Activated T-helper 1 cell treated with anti-CD3 and anti-CD28 coated beads, Interleukin-12 subunit alpha, Interleukin-12 subunit beta, Interleukin-2, Interleukin-4 antibody, amounts not matched to agents 30 ng/mL and 10 ng/mL and 1 ng/mL, durations not matched to agents 14 hours and 24 hours and 36 hours (primary cell): ENCODE measurements at regions of chrX and their contacts with region 1.

Region 1: DNA sequence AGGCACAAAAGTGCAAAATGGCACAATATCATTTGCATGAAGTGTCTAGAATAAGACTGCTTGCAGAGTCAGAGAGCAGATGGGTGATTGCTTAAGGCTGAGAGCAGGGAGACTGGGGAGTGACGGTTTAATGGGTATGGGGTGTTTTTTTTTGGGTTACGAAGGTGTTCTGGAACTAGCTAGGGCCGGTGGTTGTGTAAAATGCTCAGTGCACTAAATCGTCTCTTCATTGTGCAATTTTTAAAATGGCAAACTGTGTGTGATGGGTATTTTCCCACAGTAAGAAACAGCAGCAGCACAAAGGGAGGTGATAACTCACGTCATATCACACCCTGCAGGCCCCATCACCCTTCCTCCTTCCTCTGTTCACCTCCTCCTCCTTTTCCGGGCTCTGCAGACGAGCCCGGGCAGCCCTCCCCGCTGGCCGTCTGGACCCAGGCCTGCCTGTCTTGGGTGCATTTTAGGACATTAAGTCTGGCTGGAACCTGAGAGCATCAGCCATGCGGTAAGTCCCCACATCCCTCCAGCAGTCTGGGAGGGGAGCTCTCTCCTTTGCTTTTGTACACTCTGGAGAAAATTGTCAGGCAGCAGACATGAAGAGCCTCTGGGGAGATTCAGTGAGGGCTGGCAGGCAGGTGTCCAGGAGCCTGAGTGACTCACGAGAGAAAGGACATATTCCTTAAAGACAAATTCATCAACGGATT is 42.7 kb downstream of the ASMT start:
- DNase-seq: peak; percentile 51
- H3K4me3 Mint-ChIP-seq: peak overlapping the region; percentile 98
- H3K27ac Mint-ChIP-seq: peak overlapping the region; percentile 99
- H3K4me1 Mint-ChIP-seq: peaks cover 36% of the 10 kb centered on the region
- H3K27me3 Mint-ChIP-seq: no peaks in the 10 kb centered on the region

Region 2: DNA sequence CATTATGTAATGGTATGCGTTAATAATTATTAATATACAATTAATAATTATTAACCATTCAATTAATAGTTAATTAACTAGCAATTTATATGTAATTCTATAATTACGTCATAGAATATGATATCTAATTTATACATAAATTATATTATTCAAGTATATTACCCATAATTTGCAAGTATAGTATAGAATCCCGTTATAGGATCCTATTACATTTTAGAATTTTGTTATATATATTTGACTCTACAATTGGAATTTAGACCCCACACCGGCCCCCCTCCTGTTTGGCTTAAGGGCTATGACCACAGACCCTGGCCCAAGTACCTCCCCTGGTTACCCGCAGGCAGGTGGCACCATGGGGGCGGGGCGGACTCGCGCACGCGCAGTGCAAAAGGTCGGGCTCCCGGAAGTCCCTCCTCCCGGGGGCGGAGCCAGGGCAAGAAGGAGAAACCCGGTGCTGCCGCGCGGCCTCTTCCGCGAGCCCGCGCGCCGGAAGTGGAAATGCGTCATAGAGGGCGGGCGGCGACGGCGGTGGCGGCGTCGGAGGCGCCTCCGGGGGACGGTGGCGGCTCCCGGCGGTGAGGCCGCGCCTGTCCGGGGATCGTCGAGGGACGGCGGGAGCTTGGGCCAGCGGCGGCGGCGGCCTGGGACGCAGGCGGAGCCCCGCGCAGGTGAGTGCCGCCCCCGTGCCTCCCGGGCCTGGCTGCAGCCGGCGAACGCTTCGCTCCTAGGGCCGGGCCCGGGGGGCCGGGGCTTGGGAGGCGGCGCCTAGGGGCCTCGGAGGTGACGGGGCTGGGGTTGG is 66.2 kb before region 1 on chrX and contains the start of gene AKAP17A:
- intact Hi-C with region 1: loop called (anchors 1 kb)
- DNase-seq: peak; percentile 99
- H3K4me3 Mint-ChIP-seq: peak within 1 kb of the TSS; percentile 95
- H3K27ac Mint-ChIP-seq: peak within 1 kb of the TSS; percentile 93
- H3K4me1 Mint-ChIP-seq: peaks cover 10% of the 10 kb centered on the region
- H3K27me3 Mint-ChIP-seq: no peaks in the 10 kb centered on the region
- total RNA-seq, gene AKAP17A: 63.9 and 66.1 TPM in 2 replicates

Region 3: DNA sequence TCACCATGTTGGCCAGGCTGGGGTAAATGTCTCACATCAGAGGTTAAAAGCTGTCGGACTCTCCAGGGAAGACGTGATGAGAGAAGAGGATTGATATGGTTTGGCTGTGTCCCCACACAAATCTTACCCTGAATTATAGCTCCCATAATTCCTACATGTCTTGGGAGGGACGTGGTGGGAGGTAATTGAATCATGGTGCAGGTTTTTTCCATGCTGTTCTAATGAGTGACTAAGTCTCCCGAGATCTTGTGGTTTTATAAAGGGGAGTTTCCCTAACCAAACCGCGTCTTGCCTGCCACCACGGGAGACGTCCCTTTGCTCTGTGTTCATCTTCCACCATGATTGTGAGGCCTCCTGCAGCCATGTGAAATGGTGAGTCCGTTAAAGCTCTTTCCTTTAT is 21.7 kb after region 1 on chrX:
- intact Hi-C with region 1: loop called (anchors 1 kb)
- DNase-seq: no peak
- H3K4me3 Mint-ChIP-seq: no peak overlapping the region
- H3K27ac Mint-ChIP-seq: peak overlapping the region; percentile 4
- H3K4me1 Mint-ChIP-seq: peaks cover 33% of the 10 kb centered on the region
- H3K27me3 Mint-ChIP-seq: no peaks in the 10 kb centered on the region

Region 4: DNA sequence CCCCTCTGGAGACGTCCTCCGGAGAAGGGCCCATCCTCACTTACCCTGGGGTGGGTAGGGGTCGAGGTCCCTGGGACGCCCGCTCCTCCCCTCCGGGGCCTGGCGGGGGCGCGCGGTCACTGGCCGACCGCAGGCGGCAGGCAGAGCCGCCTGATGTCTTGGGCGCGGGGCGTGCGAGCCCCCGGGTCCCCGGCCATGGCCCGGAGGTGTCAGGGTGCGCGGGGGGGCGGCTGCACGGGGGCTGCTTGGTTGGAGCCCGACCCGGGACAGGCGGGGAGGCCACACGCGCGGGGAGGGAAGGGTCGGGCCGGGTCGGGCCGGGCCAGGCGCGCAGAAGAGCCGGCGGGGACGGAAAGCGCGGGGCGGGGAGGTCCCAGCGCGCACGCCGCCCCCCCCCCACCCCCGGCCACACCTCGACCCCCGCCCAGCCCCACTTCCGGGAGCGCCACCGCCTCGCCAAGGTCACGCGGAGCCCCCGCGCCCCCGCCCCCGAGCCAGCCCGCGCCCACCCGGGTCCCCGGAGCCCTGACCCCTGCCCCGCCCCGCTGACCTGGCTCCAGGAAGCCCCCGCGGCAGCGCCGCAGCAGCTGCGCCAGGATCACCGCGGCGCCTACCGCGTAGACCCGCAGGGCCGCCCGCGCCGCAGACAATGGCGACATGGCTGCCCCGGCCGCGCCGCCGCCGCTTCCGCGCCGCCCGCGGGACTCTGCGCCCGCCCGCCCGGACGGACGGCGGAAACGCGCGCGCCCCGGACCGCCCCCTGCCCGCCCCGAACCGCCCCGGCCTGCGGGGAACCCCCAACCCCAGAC is 843.0 kb after region 1 on chrX and contains the starts of genes DHRSX and ZBED1:
- intact Hi-C with region 1: loop called (anchors 5 kb)
- DNase-seq: peak; percentile 53
- H3K4me3 Mint-ChIP-seq: peak within 1 kb of the TSS; percentile 88
- H3K27ac Mint-ChIP-seq: peak within 1 kb of the TSS; percentile 80
- H3K4me1 Mint-ChIP-seq: peaks cover 27% of the 10 kb centered on the region
- H3K27me3 Mint-ChIP-seq: peaks cover 2% of the 10 kb centered on the region
- total RNA-seq, gene DHRSX: 26.3 and 27.4 TPM in 2 replicates
- total RNA-seq, gene ZBED1: 39.8 and 41.6 TPM in 2 replicates

Region 5: DNA sequence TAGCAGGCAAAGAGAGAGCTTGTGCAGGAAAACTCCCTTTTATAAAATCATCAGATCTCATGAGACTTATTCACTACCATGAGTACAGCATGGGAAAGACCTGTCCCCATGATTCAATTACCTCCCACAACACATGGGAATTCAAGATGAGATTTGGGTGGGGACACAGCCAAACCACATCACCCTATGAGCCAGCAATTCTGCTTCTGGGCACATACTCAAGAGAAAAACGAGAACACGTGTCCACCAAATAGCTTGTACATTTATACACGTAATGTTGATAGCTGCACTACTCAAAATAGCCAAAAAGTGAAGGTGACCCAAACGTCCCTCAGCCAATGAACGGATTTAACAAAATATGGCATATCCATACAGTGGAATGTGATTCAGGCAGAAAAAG is 937.7 kb after region 1 on chrX:
- intact Hi-C with region 1: loop called (anchors 1 kb)
- DNase-seq: no peak
- H3K4me3 Mint-ChIP-seq: no peak overlapping the region
- H3K27ac Mint-ChIP-seq: no peak overlapping the region
- H3K4me1 Mint-ChIP-seq: peaks cover 18% of the 10 kb centered on the region
- H3K27me3 Mint-ChIP-seq: no peaks in the 10 kb centered on the region